CD4-positive, alpha-beta T cell (primary cell): ENCODE measurements at regions of chr3 and their contacts with region 1.

Region 1: DNA sequence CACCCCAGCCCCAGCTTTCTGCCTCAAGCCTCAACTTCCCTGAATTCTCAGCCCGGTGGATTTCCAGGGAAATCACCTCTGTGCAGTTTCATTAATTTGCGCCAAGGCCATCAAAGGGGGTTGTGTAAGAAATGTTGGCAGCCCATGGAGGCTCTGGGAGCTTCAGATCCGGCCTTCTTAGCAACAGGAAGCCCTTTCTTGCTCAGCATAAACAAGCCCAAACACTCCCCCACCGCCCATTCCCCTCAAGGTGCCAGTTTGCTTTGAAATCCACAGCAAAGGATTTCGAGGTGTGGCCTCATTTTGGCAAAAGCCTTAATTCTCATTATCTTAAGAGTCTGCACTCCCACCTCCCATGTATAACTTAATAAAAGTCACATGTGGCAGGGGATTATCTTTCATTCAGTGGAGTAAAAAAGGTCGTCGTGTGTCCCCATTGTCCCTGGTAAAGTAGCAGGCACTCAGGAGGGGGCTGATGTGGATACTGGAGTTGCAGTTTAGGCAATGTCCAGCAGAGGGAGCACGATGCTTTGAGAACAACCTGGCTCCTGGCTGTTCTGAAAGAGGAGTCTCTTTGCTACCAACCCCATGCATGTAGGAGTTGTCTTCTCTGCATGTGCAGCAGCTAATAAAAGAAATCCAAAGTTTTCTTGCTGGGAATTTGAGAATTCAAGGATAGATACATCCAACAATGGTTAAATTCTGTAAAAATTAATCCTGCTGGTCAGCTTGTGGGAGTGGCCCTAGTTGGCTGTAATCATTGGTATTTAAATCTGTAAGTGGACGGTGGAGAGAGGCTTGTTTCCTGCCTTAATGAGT is 39.5 kb downstream of the EBLN2 start:
- DNase-seq: peak; percentile 49 to 84 (median 70)
- ATAC-seq: peak; percentile 73
- H3K4me3 ChIP-seq: no peak overlapping the region
- H3K4me3 Mint-ChIP-seq: no peak overlapping the region
- H3K27ac ChIP-seq: no peak overlapping the region
- H3K27ac Mint-ChIP-seq: no peak overlapping the region
- H3K4me1 ChIP-seq: no peaks in the 10 kb centered on the region
- H3K4me1 Mint-ChIP-seq: no peaks in the 10 kb centered on the region
- H3K27me3 ChIP-seq: no peaks in the 10 kb centered on the region
- H3K27me3 Mint-ChIP-seq: no peaks in the 10 kb centered on the region
- CTCF ChIP-seq: peak; percentile 91

Region 2: DNA sequence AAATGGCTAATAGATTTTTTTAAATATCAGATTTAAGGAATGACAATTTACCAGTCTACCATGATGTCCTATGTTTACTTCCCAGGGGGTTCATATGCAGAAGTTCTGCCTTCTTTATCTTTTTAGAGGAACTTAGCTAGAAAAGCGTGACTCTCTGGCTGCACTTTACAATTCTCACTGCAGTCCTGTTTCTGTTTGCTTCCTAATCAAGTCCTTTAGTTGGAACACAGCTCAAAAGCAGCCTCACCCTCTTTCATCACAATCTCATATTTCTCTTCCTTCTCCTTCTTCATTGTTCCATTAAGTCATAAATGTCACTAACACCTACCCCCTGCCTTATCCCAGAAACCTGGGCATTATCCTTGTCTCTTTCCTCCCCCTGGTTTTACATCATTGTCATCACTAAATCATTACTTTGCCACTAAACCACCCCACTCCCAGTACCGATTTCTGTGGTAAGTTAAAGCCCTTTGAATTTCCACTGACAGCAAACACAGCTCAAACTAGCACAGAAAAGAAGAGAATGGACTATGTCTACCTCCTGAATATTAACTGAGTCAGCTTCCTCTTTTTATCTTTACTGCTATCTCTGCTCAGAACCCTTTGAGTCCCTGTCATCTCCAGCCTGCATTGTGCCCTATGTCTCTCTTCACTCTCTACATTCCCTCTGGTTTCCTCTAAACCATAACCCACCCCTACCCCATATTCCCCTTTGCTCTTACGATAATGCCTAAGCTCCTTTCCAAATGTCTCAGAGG is 118.2 kb before region 1 on chr3:
- CTCF ChIA-PET with region 1: no interaction called
- POLR2A ChIA-PET with region 1: no interaction called
- intact Hi-C with region 1: no loop called
- DNase-seq: no peak
- ATAC-seq: no peak
- H3K4me3 ChIP-seq: no peak overlapping the region
- H3K4me3 Mint-ChIP-seq: no peak overlapping the region
- H3K27ac ChIP-seq: no peak overlapping the region
- H3K27ac Mint-ChIP-seq: no peak overlapping the region
- H3K4me1 ChIP-seq: no peaks in the 10 kb centered on the region
- H3K4me1 Mint-ChIP-seq: no peaks in the 10 kb centered on the region
- H3K27me3 ChIP-seq: no peaks in the 10 kb centered on the region
- H3K27me3 Mint-ChIP-seq: peaks cover 18% of the 10 kb centered on the region
- CTCF ChIP-seq: no peak

Region 3: GRCh38 chr3:73432023-73432705 is 331.2 kb after region 1 on chr3:
- CTCF ChIA-PET with region 1: no interaction called
- POLR2A ChIA-PET with region 1: no interaction called
- intact Hi-C with region 1: loop called in 1 of 2 experiments (anchors 5 kb)
- DNase-seq: peak in 2 of 14 experiments; percentile 15 to 17
- ATAC-seq: no peak
- H3K4me3 ChIP-seq: no peak overlapping the region
- H3K4me3 Mint-ChIP-seq: no peak overlapping the region
- H3K27ac ChIP-seq: no peak overlapping the region
- H3K27ac Mint-ChIP-seq: no peak overlapping the region
- H3K4me1 ChIP-seq: no peaks in the 10 kb centered on the region
- H3K4me1 Mint-ChIP-seq: no peaks in the 10 kb centered on the region
- H3K27me3 ChIP-seq: no peaks in the 10 kb centered on the region
- H3K27me3 Mint-ChIP-seq: peaks cover 18% of the 10 kb centered on the region
- CTCF ChIP-seq: peak; percentile 48

Region 4: GRCh38 chr3:73502609-73503583 is 401.9 kb after region 1 on chr3:
- CTCF ChIA-PET with region 1: interaction called, 3 read pairs
- POLR2A ChIA-PET with region 1: no interaction called
- intact Hi-C with region 1: loop called (anchors 1 kb)
- DNase-seq: peak in 13 of 14 experiments; percentile 10 to 70 (median 28)
- ATAC-seq: no peak
- H3K4me3 ChIP-seq: no peak overlapping the region
- H3K4me3 Mint-ChIP-seq: no peak overlapping the region
- H3K27ac ChIP-seq: no peak overlapping the region
- H3K27ac Mint-ChIP-seq: no peak overlapping the region
- H3K4me1 ChIP-seq: no peaks in the 10 kb centered on the region
- H3K4me1 Mint-ChIP-seq: no peaks in the 10 kb centered on the region
- H3K27me3 ChIP-seq: no peaks in the 10 kb centered on the region
- H3K27me3 Mint-ChIP-seq: peaks cover 32% of the 10 kb centered on the region
- CTCF ChIP-seq: peak; percentile 67